ENCODE measurements at regions of chr11 and their contacts with region 1.

Region 1: DNA sequence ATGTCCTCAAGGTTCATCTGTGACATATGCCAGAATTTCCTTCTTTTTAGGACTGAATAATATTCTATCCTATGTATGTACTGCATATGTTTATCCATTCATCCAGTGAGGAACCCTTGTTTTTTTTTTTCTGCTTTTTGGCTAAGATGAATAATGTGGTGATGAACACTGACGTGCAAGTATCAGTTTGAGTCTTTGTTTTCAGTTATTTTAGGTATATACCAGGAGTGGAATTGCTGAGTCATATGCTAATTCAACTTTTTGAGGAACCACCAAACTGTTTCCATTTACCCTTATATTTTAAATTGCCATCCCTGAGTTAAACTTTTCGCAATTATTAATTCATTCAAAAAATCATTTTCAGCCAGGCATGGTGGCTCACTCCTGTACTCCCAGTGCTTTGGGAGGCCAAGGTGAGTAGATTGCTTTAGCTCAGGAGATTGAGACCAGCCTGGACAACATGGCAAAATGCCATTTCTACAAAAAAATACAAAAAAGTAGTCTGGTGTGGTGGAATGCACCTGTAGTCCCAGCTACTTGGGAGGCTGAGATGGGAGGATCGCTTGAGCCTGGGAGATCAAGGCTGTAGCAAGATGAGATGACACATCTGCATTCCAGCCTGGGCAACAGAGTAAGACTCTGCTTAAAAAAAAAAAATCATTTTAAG is 64.2 kb downstream of the MICAL2 start:
- DNase-seq: no peak
- H3K4me3 ChIP-seq: no peak overlapping the region
- H3K27ac ChIP-seq: peak overlapping the region in 1 of 4 donors; percentile 14
- H3K4me1 ChIP-seq: peaks cover 25 to 60% (median 34%) of the 10 kb centered on the region in 4 donors
- H3K27me3 ChIP-seq: no peaks in the 10 kb centered on the region
- CTCF ChIP-seq: no peak
- EP300 ChIP-seq: no peak
- POLR2A ChIP-seq: no peak

Region 2: DNA sequence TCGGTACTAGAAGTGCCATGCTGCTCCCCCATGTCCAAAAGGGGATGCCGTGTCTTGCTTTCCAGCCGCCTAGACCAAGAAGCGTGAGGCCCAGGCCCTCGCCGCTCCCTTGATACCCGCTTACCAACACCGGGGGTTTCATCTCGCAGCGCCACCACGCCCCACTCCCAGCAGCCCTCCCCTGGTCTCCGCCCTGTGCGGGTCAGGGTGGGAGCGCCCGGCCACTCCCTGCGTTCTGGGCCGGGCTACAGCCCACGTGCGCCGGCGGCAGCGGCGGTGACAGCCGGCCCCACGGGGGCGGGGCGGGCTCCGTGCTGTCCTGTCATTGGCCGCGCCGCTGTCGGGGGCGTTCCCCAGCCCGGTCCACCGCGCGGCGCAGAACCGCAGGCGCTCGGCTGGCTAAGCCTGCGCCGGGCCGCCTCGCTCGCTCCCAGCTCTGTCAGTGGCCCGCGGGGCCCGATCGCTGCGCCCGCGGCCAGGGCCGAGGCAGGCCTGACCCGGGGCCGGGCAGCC is 64.4 kb before region 1 on chr11 and contains the start of gene MICAL2:
- in situ Hi-C with region 1: no loop called
- intact Hi-C with region 1: loop called (anchors 10 kb)
- DNase-seq: peak; percentile 94
- H3K4me3 ChIP-seq: peak within 1 kb of the TSS; percentile 65 to 97 (median 82)
- H3K27ac ChIP-seq: peak within 1 kb of the TSS; percentile 89 to 98 (median 95)
- H3K4me1 ChIP-seq: peaks cover 12 to 42% (median 28%) of the 10 kb centered on the region in 4 donors
- H3K27me3 ChIP-seq: no peaks in the 10 kb centered on the region
- CTCF ChIP-seq: no peak
- EP300 ChIP-seq: no peak
- POLR2A ChIP-seq: peak; percentile 66
- total RNA-seq, gene MICAL2: 309 to 483 (median 316) TPM